ENCODE measurements at regions of chr10 and their contacts with region 1.

Region 1: DNA sequence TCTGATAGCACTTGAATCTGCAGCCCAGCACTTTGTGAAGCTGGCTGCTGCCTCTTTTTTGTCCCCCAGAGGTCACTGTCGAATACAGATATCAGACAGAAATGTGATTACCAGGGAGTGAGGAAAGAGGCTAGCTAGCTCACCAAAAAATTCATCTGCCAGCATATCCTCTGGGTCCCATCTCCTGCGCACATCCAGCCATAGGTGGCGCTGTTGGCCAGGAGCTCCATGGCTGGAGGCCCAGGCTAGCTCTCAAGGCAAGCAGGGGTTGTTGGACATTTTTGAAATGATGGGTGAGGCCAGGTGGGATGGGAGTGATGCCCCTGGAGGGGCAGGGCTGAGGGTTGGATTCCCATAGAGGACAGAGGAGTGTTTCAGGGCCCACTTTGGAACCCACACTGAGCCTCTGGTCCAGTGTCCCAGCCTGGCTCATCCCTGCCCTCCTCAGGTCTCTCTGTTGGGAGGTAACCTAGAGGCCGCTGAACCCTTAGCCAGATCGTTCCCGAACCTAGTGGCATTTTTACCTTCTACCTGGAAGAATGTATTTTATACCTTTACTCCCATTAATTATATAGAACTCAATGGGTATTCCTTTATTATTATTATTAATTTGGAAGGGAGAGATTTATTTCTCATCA is 14.8 kb downstream of the DPCD start:
- DNase-seq: peak; percentile 71
- ATAC-seq: peak; percentile 99
- H3K4me3 ChIP-seq: no peak overlapping the region
- H3K27ac ChIP-seq: no peak overlapping the region
- H3K4me1 ChIP-seq: no peaks in the 10 kb centered on the region
- H3K27me3 ChIP-seq: no peaks in the 10 kb centered on the region
- CTCF ChIP-seq: peak; percentile 97 to 99 (median 99)
- POLR2A ChIP-seq: no peak
- RAD21 ChIP-seq: peak; percentile 96

Region 2: GRCh38 chr10:101536800-101537199 is 66.1 kb before region 1 on chr10:
- CTCF ChIA-PET with region 1: no interaction called
- POLR2A ChIA-PET with region 1: no interaction called
- RAD21 ChIA-PET with region 1: no interaction called
- intact Hi-C with region 1: no loop called
- DNase-seq: peak; percentile 39
- ATAC-seq: peak; percentile 78
- H3K4me3 ChIP-seq: no peak overlapping the region
- H3K27ac ChIP-seq: no peak overlapping the region
- H3K4me1 ChIP-seq: no peaks in the 10 kb centered on the region
- H3K27me3 ChIP-seq: no peaks in the 10 kb centered on the region
- CTCF ChIP-seq: peak; percentile 53 to 93 (median 72); a peak in 5 of 6 replicates
- POLR2A ChIP-seq: no peak
- RAD21 ChIP-seq: peak; percentile 47

Region 3: DNA sequence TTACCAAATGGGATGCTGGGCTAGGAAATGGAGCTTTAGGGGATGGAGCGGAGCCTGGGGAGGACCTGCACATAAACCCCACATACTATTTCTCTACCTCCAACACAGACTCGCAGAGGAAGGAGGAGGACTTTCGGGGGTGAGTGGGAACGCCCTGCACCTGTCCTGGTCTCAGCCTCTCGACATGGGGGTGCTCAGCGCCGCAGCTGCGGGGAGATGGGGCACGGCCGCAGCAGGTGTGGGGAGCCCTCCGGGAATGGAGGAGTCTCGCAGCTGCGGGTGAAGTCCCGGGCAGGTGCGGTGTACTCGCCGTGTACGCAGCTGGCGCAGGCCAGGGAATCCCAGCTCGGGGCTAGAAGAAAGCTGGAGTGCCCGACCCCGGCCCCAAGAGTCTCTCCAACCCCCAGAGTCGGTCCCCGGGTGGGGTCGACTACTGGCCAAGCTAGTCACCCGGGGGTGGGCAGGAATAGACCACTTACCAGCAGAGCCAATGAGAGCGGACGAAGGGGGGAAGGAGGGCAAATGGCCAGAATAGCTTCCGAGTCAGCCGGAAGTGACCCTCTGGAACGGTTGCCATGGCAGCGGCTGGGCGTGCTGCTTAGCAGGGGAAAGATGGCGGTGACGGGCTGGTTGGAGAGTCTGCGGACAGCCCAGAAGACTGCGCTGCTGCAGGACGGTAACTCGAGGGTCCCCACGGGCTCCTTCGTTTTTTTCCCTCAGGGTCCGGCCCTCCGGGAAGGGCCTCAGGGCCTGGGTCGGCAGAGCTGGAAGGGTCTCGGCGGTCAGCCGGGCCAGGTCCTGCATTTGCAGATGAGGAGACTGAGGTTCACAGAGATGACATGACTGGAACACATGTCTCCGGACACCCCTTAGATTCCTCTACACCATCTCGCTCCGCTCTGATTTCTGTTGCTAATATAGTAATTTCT is 14.9 kb before region 1 on chr10 and contains the starts of genes DPCD and POLL:
- CTCF ChIA-PET with region 1: interaction called, 25 read pairs
- POLR2A ChIA-PET with region 1: no interaction called
- RAD21 ChIA-PET with region 1: interaction called in 1 of 2 experiments, 3 read pairs
- intact Hi-C with region 1: no loop called
- DNase-seq: peak; percentile 91
- ATAC-seq: peak; percentile 92
- H3K4me3 ChIP-seq: peak within 1 kb of the TSS; percentile 89 to 94
- H3K27ac ChIP-seq: peak within 1 kb of the TSS; percentile 63
- H3K4me1 ChIP-seq: peaks cover 10 to 16% of the 10 kb centered on the region in 2 experiments; a peak in 3 of 4 replicates
- H3K27me3 ChIP-seq: no peaks in the 10 kb centered on the region
- CTCF ChIP-seq: no peak
- POLR2A ChIP-seq: peak; percentile 75
- RAD21 ChIP-seq: no peak
- total RNA-seq, gene DPCD: 39.5 TPM
- total RNA-seq, gene POLL: 51.3 TPM

Region 4: DNA sequence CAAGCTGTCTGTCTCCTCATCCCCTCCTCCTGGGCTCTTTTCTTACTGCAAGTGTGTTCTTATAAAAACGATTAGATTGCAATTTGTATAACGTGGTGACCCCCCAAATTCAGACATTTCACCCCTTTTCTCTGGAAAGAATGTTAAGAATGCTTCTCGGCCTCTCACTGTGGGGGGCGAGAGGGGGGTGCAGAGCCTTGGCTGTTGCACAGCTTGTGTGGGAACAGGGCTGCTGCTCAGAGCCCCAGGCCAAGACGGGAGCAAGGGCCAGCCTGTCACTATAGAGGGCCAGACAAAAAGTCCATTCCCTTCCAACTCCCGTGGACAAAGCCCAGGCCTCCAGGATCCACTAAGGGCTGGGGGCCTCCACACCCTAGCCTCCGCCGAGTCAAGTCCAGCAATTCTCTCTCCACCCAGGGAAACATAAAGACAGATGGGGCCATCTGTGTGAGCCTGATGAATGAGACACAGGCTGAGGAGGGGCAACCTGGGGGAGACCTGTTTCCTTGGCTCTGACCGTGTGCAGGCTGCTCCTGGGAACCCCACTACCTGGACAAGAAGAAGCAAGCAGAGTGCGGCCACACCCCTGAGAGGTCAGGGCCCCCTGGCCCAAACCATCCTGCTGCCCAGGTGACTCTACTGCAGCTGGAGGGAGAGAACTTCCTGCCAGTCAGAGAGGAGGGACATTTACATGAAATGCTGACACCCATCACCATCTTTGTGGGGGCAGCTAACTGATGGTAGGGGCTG is 12.3 kb after region 1 on chr10:
- CTCF ChIA-PET with region 1: interaction called, 17 read pairs
- POLR2A ChIA-PET with region 1: no interaction called
- RAD21 ChIA-PET with region 1: interaction called in 1 of 2 experiments, 3 read pairs
- intact Hi-C with region 1: no loop called
- DNase-seq: no peak
- ATAC-seq: no peak
- H3K4me3 ChIP-seq: no peak overlapping the region
- H3K27ac ChIP-seq: no peak overlapping the region
- H3K4me1 ChIP-seq: peaks cover 0 to 6% of the 10 kb centered on the region in 2 experiments; a peak in 1 of 4 replicates
- H3K27me3 ChIP-seq: no peaks in the 10 kb centered on the region
- CTCF ChIP-seq: 0 out of 6 replicates have a peak, but pooled peaks of 1 of the 3 experiments have one; percentile 5
- POLR2A ChIP-seq: no peak
- RAD21 ChIP-seq: no peak

Region 5: GRCh38 chr10:101773923-101774588 is 171.2 kb after region 1 on chr10:
- CTCF ChIA-PET with region 1: interaction called, 10 read pairs
- POLR2A ChIA-PET with region 1: no interaction called
- RAD21 ChIA-PET with region 1: interaction called, 3 to 4 read pairs
- intact Hi-C with region 1: no loop called
- DNase-seq: no peak
- ATAC-seq: no peak
- H3K4me3 ChIP-seq: no peak overlapping the region
- H3K27ac ChIP-seq: no peak overlapping the region
- H3K4me1 ChIP-seq: no peaks in the 10 kb centered on the region
- H3K27me3 ChIP-seq: no peaks in the 10 kb centered on the region
- CTCF ChIP-seq: no peak
- POLR2A ChIP-seq: no peak
- RAD21 ChIP-seq: no peak

Region 6: GRCh38 chr10:101797403-101798059 is 194.7 kb after region 1 on chr10:
- CTCF ChIA-PET with region 1: interaction called, 10 read pairs
- POLR2A ChIA-PET with region 1: no interaction called
- RAD21 ChIA-PET with region 1: no interaction called
- intact Hi-C with region 1: no loop called
- DNase-seq: no peak
- ATAC-seq: no peak
- H3K4me3 ChIP-seq: no peak overlapping the region
- H3K27ac ChIP-seq: no peak overlapping the region
- H3K4me1 ChIP-seq: no peaks in the 10 kb centered on the region
- H3K27me3 ChIP-seq: no peaks in the 10 kb centered on the region
- CTCF ChIP-seq: no peak
- POLR2A ChIP-seq: no peak
- RAD21 ChIP-seq: no peak